Activated CD4-positive, alpha-beta T cell treated with anti-CD3 and anti-CD28 coated beads, Interleukin-2, amount 10 ng/mL, durations not matched to agents 24 days and 14 days (primary cell): ENCODE measurements at regions of chr10 and their contacts with region 1.

Region 1: GRCh38 chr10:22365644-22366565 is 20.6 kb downstream of the SPAG6 start:
- DNase-seq: no peak
- H3K4me3 Mint-ChIP-seq: no peak overlapping the region
- H3K27ac Mint-ChIP-seq: peak overlapping the region; percentile 67
- H3K4me1 Mint-ChIP-seq: peaks cover 36% of the 10 kb centered on the region
- H3K27me3 Mint-ChIP-seq: no peaks in the 10 kb centered on the region

Region 2: GRCh38 chr10:22308390-22308789 is 57.5 kb before region 1 on chr10:
- intact Hi-C with region 1: loop called (anchors 2 kb)
- DNase-seq: peak; percentile 79
- H3K4me3 Mint-ChIP-seq: no peak overlapping the region
- H3K27ac Mint-ChIP-seq: no peak overlapping the region
- H3K4me1 Mint-ChIP-seq: peaks cover 10% of the 10 kb centered on the region
- H3K27me3 Mint-ChIP-seq: peaks cover 2% of the 10 kb centered on the region

Region 3: DNA sequence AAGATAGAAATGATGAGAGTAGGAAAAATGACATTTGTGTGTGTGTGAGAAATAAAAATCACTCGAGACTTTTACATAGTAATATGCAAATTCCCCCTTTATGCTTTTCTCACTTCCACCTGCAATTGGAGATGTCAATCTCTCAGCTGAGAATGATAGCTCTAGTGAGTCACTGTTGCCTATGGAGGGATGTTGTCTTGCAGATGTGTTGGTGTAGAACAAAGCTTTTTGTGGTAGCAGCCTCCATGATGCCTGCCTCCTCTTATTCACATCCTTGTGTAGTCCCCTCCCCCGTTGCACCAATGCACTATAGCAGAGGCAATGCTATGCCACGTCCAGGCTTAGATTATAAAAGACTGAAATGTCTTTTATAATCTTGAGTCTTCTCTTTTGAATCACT is 13.2 kb after region 1 on chr10:
- intact Hi-C with region 1: loop called (anchors 1 kb)
- DNase-seq: peak; percentile 74
- H3K4me3 Mint-ChIP-seq: peak overlapping the region; percentile 10
- H3K27ac Mint-ChIP-seq: peak overlapping the region; percentile 74
- H3K4me1 Mint-ChIP-seq: peaks cover 17% of the 10 kb centered on the region
- H3K27me3 Mint-ChIP-seq: peaks cover 4% of the 10 kb centered on the region